ENCODE measurements at regions of chr10 and their contacts with region 1.

Region 1: DNA sequence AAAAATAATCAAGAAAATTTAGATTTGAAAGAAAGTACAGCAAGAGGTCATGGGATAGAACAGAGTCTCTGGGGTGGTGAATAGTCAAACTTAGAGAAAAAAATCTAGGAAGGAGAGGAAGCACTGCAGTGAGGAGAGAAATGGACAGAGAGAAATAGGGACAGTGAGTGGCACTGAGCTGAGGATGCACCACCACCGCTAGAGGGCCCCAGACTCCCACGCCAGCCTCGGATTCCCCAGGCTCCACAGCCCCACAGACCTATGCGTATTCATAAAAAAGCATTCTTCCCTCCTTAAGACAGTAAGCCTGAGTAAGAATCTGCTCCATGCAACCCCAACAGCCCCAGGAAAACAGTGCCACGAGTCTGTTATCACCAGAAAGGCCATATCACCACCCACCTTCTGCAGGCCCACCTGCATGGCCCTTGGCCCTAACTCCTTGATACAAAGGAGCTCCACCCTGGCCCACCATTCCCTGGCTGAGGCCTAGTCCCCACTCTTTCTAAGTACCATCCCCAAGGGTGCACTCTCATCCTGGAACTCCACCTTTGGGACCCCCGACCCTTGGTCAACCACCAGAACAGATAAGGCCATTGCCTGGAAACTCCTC is 91.0 kb downstream of the ALOX5 start:
- DNase-seq: peak; percentile 83
- CTCF ChIP-seq: peak; percentile 92

Region 2: DNA sequence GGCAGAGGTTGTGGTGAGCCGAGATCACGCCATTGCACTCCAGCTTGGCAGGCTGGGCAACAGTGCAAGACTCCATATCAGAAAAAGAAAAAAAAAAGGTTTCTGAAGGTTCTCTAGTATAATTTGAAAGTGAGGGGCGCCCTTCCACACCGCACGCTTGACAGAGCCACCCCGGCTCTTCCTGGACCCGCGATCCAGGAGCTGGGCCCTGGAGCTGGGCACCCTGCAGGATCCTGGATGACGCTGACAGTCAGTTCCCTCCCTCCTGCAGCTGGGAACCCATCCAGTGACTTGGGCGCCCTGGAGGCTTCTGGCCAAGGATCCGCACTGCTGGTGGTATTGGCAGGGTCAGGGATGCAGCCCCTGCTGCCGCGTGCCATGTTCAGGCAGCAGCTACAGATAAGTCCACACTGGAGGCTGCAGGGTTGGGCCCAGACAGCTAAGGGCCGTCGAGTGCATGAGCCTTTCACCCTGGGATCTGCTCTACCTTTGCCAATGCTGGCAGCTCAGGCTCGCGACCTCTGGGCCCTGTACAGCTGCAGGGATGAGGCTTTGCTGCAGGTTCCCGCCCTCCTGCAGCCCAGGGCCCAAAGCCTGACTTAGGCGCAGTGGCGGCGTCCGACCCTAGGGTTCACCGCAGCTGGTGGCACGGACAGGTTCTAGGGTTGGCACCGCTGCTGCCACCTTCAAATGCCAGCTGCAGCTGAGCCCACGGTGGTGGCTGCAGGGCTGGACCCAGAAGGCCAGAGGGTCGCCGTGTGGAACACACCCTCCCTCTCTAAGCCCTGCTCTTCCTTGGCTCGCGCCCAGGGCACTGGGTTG is 259.9 kb before region 1 on chr10:
- CTCF ChIA-PET with region 1: no interaction called
- POLR2A ChIA-PET with region 1: no interaction called
- DNase-seq: no peak
- CTCF ChIP-seq: no peak

Region 3: GRCh38 chr10:45249978-45250693 is 214.9 kb before region 1 on chr10:
- CTCF ChIA-PET with region 1: interaction called, 17 read pairs
- POLR2A ChIA-PET with region 1: no interaction called
- DNase-seq: peak; percentile 35
- CTCF ChIP-seq: peak; percentile 42

Region 4: DNA sequence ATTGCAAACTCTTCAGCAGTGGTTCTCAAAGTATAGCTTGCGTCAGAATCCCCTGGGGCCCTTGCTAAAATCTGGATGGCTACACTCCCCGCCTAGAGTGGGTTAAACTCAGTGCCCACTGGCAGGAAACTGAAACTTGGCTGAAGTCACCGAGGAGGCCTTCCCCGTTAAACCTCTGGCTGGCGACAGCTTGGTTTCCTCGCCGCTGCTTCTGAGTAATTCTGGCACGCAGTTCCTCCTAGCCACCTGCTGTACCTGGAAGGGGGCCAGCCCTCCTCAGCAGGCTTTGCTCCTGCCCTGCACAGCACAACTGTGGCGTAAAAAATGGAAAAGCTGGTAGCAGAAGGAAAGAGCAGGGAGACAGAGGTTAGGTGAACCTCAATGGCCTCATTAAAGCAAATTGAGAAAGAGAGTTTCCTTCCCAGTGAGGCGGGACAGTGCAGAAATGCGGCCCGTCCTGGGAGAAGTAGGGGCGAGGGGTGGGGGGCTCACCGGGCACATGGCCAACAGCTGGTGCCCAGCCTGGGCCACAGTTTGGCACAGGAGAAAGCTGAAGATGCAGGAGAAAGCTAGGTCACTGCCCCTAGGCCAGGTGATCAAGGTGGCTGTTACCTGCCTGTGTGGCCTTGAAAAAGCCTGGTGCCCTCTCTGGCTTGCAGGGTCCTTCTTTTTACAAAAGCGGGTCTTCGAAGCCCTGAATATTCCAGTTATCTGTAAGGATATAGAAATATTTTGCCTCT is 44.4 kb before region 1 on chr10:
- CTCF ChIA-PET with region 1: interaction called, 15 read pairs
- POLR2A ChIA-PET with region 1: interaction called, 4 read pairs
- DNase-seq: peak; percentile 73
- CTCF ChIP-seq: no peak

Region 5: GRCh38 chr10:45453639-45454255 is 11.3 kb before region 1 on chr10:
- CTCF ChIA-PET with region 1: interaction called, 16 read pairs
- POLR2A ChIA-PET with region 1: interaction called, 3 read pairs
- DNase-seq: peak; percentile 71
- CTCF ChIP-seq: no peak

Region 6: DNA sequence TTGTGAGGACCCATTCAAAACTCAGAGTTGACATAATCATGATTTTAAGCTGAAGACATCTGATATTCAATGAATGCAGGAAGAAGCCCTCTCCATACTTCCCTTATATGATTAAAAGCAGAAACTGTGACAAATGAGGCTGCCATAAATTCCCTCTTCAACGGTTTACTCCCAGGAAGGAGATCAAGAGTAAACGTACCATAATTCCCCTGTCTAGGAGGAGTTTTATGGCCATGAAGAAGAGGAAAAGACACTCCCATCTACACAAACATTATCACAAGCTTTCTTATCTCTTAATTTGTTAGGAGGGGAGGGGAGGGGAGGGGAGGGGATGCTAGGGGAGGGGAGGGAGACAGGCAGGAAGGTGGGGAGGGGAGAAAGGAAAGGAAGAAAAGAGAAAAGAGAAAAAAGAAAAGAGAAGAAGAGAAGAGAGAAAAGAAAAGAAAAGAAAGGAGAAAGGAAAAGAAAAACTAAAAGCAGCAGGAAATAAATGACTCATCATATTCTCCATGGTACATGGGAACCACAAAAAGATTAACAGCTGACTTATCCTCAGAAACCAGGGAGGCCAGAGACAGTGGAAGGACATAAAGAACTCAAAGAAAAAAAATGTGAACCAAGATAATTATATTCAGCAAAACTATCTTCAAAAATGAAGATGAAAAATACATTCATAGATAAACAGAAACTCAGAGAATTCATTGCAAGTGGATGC is 30.5 kb after region 1 on chr10:
- CTCF ChIA-PET with region 1: interaction called, 12 read pairs
- POLR2A ChIA-PET with region 1: no interaction called
- DNase-seq: no peak
- CTCF ChIP-seq: no peak

Region 7: DNA sequence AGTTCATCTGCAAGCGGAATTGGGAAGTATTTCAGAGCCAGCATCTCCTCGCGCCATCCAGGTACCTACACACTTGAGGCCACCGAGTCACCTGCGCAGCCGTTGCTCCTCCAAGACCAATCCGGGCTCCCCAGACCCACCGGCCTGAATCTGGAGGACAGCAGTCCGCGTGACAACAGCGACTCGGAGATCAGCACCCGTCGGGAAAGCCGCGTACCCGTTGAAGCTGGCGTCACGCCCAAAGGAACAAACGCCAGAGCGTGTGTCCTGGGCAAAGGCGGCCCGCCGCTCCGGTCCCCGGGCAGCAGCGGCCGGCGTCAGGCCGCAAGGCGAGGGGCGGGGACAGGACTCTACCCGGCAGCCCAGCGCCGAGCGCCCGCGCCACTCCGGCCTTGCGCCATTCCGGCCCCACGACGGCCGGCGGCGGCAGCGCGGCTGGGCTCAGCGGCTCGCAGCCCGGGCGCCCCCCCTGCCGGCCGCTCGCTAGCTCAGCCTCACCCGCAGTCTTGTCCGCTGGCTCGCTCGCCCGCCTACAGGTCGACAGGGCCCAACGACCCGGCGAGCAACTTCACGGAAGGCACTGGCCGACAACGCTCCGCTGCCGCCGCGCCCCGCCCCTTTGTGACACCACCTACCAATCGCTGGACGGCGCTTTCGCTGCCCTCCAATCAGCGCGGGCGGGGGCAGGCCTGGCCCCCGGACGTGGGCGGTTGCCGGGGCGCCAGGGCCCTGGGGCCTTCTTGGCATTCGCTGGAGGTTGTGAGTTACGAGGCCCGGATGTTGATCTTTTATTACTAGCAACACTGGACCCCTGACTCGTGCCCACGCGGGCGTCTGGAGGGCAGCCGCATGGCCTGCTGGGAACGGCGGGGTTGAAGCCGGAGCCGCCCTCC is 207.4 kb after region 1 on chr10 and contains the start of gene ZFAND4:
- CTCF ChIA-PET with region 1: interaction called, 39 read pairs
- POLR2A ChIA-PET with region 1: interaction called, 3 read pairs
- DNase-seq: peak; percentile 99
- CTCF ChIP-seq: peak; percentile 83